ENCODE measurements at regions of chr10 and their contacts with region 1.

Region 1: GRCh38 chr10:29443745-29444523 is 155.1 kb downstream of the LYZL1 start:
- DNase-seq: peak; percentile 27
- H3K4me3 Mint-ChIP-seq: no peak overlapping the region
- H3K27ac Mint-ChIP-seq: no peak overlapping the region
- H3K4me1 Mint-ChIP-seq: peaks cover 23% of the 10 kb centered on the region
- H3K27me3 Mint-ChIP-seq: no peaks in the 10 kb centered on the region
- CTCF ChIP-seq: no peak

Region 2: GRCh38 chr10:29377333-29377961 is 66.5 kb before region 1 on chr10:
- CTCF ChIA-PET with region 1: interaction called, 8 read pairs
- POLR2A ChIA-PET with region 1: interaction called, 3 read pairs
- intact Hi-C with region 1: loop called (anchors 2 kb)
- DNase-seq: peak; percentile 42
- H3K4me3 Mint-ChIP-seq: no peak overlapping the region
- H3K27ac Mint-ChIP-seq: no peak overlapping the region
- H3K4me1 Mint-ChIP-seq: no peaks in the 10 kb centered on the region
- H3K27me3 Mint-ChIP-seq: peaks cover 19% of the 10 kb centered on the region
- CTCF ChIP-seq: peak; percentile 66

Region 3: DNA sequence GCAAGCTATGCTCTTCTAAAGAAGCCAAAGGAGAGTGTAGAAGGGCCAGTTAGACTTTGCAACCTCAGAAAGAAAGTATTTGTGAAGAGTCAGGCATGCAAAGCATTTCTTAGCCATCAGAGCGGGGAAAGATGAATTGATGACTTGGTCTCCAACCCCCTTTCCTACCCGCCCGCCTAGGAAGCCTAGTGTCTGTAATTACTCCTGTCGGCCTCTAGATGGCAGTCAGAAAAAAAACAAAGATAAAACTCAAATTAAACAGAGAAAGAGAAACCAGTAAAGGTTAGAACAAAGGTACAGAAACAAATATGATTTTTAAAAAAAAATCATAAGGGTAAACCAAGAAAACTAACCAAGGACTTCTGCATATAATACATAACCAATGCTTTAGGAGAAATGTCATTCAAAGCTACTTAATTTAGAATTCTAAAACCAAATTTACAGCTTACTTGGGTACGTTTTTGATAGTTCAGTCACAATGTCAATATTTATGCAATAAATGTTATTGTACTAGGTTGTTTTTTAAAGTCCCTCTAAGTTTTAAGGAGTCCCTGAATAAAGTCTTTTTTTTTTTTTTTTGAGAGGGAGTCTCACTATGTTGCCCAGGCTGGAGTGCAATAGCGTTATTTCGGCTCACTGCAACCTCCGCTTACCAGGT is 57.5 kb before region 1 on chr10:
- CTCF ChIA-PET with region 1: interaction called, 8 read pairs
- POLR2A ChIA-PET with region 1: no interaction called
- intact Hi-C with region 1: loop called (anchors 1 kb)
- DNase-seq: peak; percentile 48
- H3K4me3 Mint-ChIP-seq: no peak overlapping the region
- H3K27ac Mint-ChIP-seq: no peak overlapping the region
- H3K4me1 Mint-ChIP-seq: no peaks in the 10 kb centered on the region
- H3K27me3 Mint-ChIP-seq: peaks cover 17% of the 10 kb centered on the region
- CTCF ChIP-seq: peak; percentile 65

Region 4: GRCh38 chr10:29517352-29517923 is 73.5 kb after region 1 on chr10:
- CTCF ChIA-PET with region 1: no interaction called
- POLR2A ChIA-PET with region 1: no interaction called
- intact Hi-C with region 1: loop called (anchors 2 kb)
- DNase-seq: peak; percentile 34
- H3K4me3 Mint-ChIP-seq: no peak overlapping the region
- H3K27ac Mint-ChIP-seq: no peak overlapping the region
- H3K4me1 Mint-ChIP-seq: no peaks in the 10 kb centered on the region
- H3K27me3 Mint-ChIP-seq: no peaks in the 10 kb centered on the region
- CTCF ChIP-seq: peak; percentile 47

Measured in MCF 10A (cell line).